Sciatic nerve (tissue), 2 donors: ENCODE measurements at regions of chr2 and their contacts with region 1.

Region 1: GRCh38 chr2:121118951-121119555 is 165.9 kb downstream of the TFCP2L1 start:
- DNase-seq: no peak
- ATAC-seq: no peak

Region 2: GRCh38 chr2:121151749-121152148 is 32.7 kb after region 1 on chr2:
- intact Hi-C with region 1: loop called (anchors 1 kb)
- DNase-seq: no peak
- ATAC-seq: no peak